ENCODE measurements at regions of chr3 and their contacts with region 1.

Region 1: GRCh38 chr3:190424478-190425439 is 24.9 kb downstream of the TMEM207 start:
- DNase-seq: peak; percentile 25 to 62
- ATAC-seq: peak in 3 of 4 donors; percentile 27 to 60 (median 42)
- H3K4me3 ChIP-seq: no peak overlapping the region
- H3K27ac ChIP-seq: no peak overlapping the region
- H3K4me1 ChIP-seq: no peaks in the 10 kb centered on the region
- H3K27me3 ChIP-seq: peaks cover 0 to 2% (median 0%) of the 10 kb centered on the region in 3 donors
- CTCF ChIP-seq: peak; percentile 55

Region 2: DNA sequence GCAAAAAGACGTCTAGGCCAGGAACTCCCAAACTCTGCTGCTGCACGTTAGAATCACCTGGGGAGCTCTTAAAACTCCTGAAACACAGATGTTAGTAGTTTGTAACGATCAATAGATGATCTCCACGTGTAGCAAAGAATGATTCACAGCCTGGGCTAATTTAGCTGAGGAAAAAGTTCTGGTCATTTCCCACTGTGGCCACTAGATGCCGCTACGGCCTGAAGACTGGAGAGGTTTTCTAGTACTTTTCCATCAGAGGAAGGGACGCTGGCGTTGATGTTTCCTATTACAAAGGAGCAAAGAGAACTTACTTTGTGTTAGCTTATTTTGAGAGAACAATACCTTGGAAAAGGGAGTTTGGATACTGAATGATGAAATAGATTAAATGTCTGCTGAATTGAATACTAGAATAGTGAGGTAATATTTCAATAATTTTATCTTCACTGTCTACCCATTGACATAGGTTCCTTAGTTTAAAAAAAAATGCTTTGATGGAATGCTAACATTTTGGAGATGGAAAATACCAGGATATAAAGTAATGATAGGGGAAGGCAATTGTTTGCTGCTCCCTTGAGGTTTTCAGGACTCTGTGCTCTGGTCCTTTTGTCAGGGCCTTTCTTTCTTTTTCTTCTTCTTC is 463.1 kb before region 1 on chr3:
- intact Hi-C with region 1: loop called in 1 of 2 experiments (anchors 10 kb)
- DNase-seq: peak; percentile 70 to 76
- ATAC-seq: peak; percentile 74 to 95 (median 87)
- H3K4me3 ChIP-seq: no peak overlapping the region
- H3K27ac ChIP-seq: no peak overlapping the region
- H3K4me1 ChIP-seq: no peaks in the 10 kb centered on the region
- H3K27me3 ChIP-seq: no peaks in the 10 kb centered on the region
- CTCF ChIP-seq: peak; percentile 91

Region 3: DNA sequence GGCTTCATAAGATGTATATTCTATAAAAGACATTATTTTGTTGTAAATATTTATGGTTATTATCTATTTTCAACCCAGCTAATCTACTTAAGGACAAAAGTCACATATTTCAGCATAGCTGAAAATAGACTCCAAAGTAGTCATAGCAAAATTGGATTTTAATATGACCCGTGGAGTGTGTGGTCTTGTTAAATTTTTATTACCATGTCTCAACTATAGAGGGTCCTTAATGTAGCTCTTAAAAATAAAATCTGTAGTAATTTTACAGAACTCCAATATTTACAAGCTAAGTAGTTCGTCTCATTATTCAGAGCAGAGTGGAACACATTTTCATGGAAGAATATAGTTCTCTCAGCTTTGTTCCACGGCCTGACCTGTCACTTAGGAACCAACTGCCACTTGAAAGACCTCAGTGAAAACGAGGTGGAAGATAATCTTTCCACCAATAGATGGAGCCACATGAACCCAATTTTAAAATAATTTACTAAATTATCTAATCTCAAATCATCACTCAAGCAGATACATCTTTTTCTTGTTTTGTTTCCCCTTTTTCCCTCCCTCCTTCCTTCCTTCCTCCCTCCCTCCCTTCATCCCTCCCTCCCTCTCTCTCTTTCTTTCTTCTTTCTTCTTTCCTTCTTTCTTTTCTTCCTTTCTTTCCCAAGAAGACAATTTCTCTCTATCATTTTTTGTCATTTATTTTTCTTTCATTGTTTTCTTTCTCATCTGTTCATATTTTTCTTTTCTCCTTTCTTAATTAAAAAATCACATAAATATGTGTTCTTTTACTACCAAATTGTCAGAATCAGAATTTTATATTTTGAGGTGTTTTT is 199.7 kb before region 1 on chr3:
- intact Hi-C with region 1: loop called in 1 of 2 experiments (anchors 10 kb)
- DNase-seq: no peak
- ATAC-seq: no peak
- H3K4me3 ChIP-seq: no peak overlapping the region
- H3K27ac ChIP-seq: no peak overlapping the region
- H3K4me1 ChIP-seq: no peaks in the 10 kb centered on the region
- H3K27me3 ChIP-seq: no peaks in the 10 kb centered on the region
- CTCF ChIP-seq: peak; percentile 39